ENCODE measurements at regions of chr2 and their contacts with region 1.

Region 1: DNA sequence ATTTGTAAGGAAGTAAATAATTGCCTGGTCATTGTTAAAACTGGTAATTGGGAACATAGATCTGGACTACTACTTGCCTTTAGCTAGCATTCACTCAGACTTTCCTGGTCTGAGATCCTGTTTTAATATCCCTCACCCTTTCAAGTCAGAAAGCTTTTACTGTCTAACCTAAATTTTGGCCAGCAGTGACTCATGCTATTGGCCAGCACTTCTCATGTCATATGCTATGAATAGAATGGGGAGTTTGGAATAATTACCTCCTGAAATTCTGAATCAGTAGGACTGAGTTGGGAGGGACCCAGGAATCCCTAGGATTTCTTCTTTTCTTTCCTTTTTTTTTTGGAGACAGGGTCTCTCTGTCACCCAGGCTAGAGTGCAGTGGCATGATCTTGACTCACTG is 19.3 kb downstream of the STK36 start:
- H3K4me3 ChIP-seq: no peak overlapping the region
- H3K27ac ChIP-seq: no peak overlapping the region
- H3K4me1 ChIP-seq: no peaks in the 10 kb centered on the region
- CTCF ChIP-seq: no peak

Region 2: DNA sequence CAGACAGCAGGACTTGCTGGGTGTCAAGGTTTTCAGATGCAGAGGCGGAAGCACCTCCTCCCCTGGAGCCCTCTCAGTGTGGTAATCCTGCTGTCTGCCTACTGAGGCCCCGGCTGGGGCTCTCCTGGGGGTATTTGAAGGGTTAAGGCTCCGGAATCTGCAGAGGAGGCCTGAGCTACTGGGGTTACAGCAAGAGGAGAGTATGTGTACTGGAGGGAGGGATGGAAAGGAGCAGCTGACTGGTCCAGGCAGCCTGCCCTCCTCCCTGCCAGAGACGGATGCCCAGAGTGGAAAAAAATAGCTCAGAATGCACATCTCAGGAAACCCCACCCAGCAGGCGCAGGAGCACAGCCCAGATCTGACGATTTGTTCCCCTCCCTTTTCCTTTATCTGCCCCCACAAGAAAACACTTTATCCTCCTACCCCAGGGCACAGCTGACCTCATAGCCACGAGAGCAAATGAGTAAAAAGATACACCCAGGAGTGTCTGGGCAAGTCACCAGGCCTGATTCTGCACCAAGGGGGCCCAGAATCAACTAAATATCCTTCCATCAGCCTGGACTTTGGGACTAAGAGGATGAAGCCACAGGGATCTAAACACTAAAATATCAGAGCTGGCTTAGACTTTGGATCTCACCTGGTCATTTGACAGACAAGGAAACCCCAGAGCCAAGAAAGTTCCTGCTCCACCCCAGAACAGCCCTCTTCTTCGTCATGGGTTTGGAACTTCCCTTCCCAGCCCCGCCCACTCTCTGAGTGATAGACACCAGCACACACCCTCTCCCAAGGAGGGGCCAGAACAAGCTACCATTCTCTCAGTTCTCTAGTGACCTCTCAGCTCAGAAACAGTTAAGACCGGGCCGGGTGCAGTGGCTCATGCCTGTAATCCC is 404.4 kb before region 1 on chr2:
- CTCF ChIA-PET with region 1: no interaction called
- POLR2A ChIA-PET with region 1: no interaction called
- H3K4me3 ChIP-seq: peak overlapping the region; percentile 25
- H3K27ac ChIP-seq: peak overlapping the region; percentile 52
- H3K4me1 ChIP-seq: no peaks in the 10 kb centered on the region
- CTCF ChIP-seq: no peak

Region 3: DNA sequence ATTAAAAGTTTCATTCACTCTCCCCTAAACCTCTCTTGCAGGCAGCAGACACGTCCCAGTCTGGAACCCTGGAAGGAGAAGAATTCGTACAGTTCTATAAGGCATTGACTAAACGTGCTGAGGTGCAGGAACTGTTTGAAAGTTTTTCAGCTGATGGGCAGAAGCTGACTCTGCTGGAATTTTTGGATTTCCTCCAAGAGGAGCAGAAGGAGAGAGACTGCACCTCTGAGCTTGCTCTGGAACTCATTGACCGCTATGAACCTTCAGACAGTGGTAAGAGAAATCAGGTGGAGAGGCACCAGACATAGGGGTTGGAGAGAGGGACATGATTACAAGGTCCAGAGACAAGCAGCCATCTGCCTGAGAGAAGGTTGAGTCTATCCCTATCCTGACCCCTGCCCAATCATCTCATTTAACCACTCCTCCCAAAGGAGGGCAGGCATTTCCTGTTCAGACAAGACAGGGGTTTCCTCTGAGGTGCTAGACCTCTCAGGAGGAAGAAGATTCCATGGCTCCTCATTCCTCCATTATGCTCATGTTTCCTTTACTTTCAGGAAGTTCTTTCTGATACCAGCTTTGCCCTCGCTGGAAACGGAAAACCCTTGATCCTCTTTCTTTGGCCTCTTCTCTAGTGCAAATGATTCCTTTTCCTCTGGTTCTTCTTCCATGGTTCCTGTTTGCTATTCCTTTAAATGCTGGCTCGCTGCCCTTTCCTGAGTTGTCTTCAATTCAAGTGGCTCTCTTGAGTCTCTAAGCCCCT is 68.4 kb before region 1 on chr2:
- CTCF ChIA-PET with region 1: no interaction called
- POLR2A ChIA-PET with region 1: no interaction called
- H3K4me3 ChIP-seq: no peak overlapping the region
- H3K27ac ChIP-seq: no peak overlapping the region
- H3K4me1 ChIP-seq: no peaks in the 10 kb centered on the region
- CTCF ChIP-seq: no peak

Region 4: DNA sequence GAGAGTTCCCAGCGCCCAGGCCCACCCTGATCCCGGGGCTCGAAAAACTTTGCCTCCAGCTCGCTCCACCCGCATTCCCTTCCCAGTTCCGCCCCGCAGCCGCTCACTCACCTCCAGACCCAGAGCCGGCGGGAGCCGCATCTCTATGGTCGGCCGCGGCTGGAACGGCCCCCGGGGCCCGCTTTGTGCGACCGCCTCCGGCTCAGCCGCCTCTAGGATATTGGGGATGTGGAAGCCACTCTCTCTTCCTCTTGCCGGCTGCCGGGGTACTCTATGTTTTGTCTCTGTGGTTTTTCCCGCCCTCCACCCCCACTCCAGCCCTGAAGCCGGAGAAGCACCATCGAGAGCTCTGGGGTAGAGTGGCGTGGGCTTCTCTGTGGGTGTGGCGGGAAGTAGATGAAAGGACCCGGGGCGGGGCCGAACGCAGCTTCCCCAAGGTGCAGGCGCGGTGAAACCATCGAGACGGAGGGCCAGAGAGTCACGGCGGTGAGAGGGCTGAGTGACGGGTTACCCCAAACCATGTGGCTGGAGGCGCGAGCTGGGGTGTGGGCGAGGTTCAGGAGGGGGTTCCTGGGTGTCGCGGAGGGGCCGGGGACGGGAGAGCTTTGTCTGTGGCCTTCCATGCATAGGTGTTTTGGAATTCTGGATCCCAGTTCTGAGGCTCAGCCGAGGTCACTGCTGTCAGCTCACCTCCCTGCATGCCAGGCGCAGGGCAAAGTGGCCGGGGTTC is 31.8 kb before region 1 on chr2 and contains the starts of genes BCS1L and ZNF142:
- CTCF ChIA-PET with region 1: interaction called, 12 read pairs
- POLR2A ChIA-PET with region 1: interaction called, 9 read pairs
- H3K4me3 ChIP-seq: peak within 1 kb of the TSS; percentile 85
- H3K27ac ChIP-seq: peak within 1 kb of the TSS; percentile 76
- H3K4me1 ChIP-seq: no peaks in the 10 kb centered on the region
- CTCF ChIP-seq: no peak

Region 5: GRCh38 chr2:218671654-218672566 is 19.3 kb before region 1 on chr2 and contains the starts of genes RNF25 and STK36:
- CTCF ChIA-PET with region 1: interaction called, 26 read pairs
- POLR2A ChIA-PET with region 1: interaction called, 6 read pairs
- H3K4me3 ChIP-seq: peak within 1 kb of the TSS; percentile 94
- H3K27ac ChIP-seq: peak within 1 kb of the TSS; percentile 54
- H3K4me1 ChIP-seq: no peaks in the 10 kb centered on the region
- CTCF ChIP-seq: peak; percentile 38; the same call in 1 of the 2 replicates

Region 6: GRCh38 chr2:218701806-218702205 is 10.6 kb after region 1 on chr2:
- CTCF ChIA-PET with region 1: interaction called, 16 read pairs
- POLR2A ChIA-PET with region 1: no interaction called
- H3K4me3 ChIP-seq: no peak overlapping the region
- H3K27ac ChIP-seq: no peak overlapping the region
- H3K4me1 ChIP-seq: no peaks in the 10 kb centered on the region
- CTCF ChIP-seq: no peak

Region 7: GRCh38 chr2:218777276-218777990 is 86.2 kb after region 1 on chr2:
- CTCF ChIA-PET with region 1: interaction called, 10 read pairs
- POLR2A ChIA-PET with region 1: no interaction called
- H3K4me3 ChIP-seq: no peak overlapping the region
- H3K27ac ChIP-seq: no peak overlapping the region
- H3K4me1 ChIP-seq: no peaks in the 10 kb centered on the region
- CTCF ChIP-seq: no peak